Naive thymus-derived CD4-positive, alpha-beta T cell (primary cell): ENCODE measurements at regions of chr11 and their contacts with region 1.

Region 1: GRCh38 chr11:104705490-104706190 is 192.6 kb downstream of the CASP12 start:
- DNase-seq: peak; percentile 10 to 92 (median 87)
- ATAC-seq: peak; percentile 99
- H3K4me3 ChIP-seq: peak overlapping the region; percentile 54
- H3K4me3 Mint-ChIP-seq: peak overlapping the region; percentile 65 to 87 (median 72)
- H3K27ac ChIP-seq: peak overlapping the region; percentile 67
- H3K27ac Mint-ChIP-seq: peak overlapping the region; percentile 82 to 98 (median 96)
- H3K4me1 ChIP-seq: peaks cover 40 to 49% of the 10 kb centered on the region in 2 donors
- H3K4me1 Mint-ChIP-seq: peaks cover 33 to 75% (median 60%) of the 10 kb centered on the region in 7 donors
- H3K27me3 ChIP-seq: no peaks in the 10 kb centered on the region
- H3K27me3 Mint-ChIP-seq: no peaks in the 10 kb centered on the region

Region 2: DNA sequence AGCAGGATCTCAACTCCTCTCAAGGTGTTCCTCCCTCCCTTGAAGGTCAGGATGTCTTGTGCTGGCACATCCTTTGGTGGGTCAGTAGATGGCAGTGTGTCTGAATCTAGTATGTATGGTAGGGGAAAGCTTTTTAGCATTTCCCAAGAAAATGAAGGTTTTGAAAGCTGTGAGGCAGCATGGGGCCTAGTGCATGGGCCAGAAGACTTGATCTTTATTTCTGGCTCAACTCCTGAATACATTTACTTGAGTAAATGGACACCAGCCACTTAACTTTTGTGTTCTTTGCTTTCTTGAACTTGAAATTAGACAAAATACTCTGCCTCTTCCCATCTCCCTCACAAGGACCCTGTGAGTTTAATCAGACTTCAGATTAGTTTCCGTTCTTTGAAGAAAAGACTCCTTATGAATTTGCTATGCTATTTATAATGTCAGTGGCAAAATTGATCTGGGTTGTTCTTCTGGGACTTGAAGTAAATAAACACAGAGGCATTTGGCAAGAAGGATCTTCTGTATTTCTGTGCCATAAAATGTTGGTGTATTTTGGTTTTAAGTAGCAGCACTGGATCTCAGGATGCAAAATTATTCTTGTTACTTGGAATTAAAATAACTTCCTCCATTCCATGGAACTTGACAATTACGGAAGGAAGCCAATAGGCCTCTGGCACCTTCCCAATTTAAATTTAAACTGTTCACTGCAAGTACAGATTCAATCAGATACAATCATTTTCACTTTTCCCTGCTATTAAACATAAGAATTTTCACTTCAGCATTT is 96.1 kb before region 1 on chr11:
- CTCF ChIA-PET with region 1: interaction called, 3 read pairs
- POLR2A ChIA-PET with region 1: no interaction called
- intact Hi-C with region 1: loop called (anchors 1 to 2 kb)
- DNase-seq: peak in 7 of 9 donors; percentile 17 to 63 (median 51)
- ATAC-seq: peak; percentile 95
- H3K4me3 ChIP-seq: no peak overlapping the region
- H3K4me3 Mint-ChIP-seq: no peak overlapping the region
- H3K27ac ChIP-seq: no peak overlapping the region
- H3K27ac Mint-ChIP-seq: peak overlapping the region in 3 of 9 donors; percentile 25 to 47 (median 41)
- H3K4me1 ChIP-seq: peaks cover 0 to 5% of the 10 kb centered on the region in 2 donors
- H3K4me1 Mint-ChIP-seq: peaks cover 0 to 20% (median 11%) of the 10 kb centered on the region in 7 donors
- H3K27me3 ChIP-seq: no peaks in the 10 kb centered on the region
- H3K27me3 Mint-ChIP-seq: peaks cover 0 to 6% (median 0%) of the 10 kb centered on the region in 5 donors

Region 3: GRCh38 chr11:104736502-104736901 is 30.9 kb after region 1 on chr11:
- CTCF ChIA-PET with region 1: no interaction called
- POLR2A ChIA-PET with region 1: interaction called, 3 read pairs
- intact Hi-C with region 1: loop called in 1 of 2 experiments (anchors 2 kb)
- DNase-seq: no peak
- ATAC-seq: peak; percentile 36
- H3K4me3 ChIP-seq: no peak overlapping the region
- H3K4me3 Mint-ChIP-seq: no peak overlapping the region
- H3K27ac ChIP-seq: no peak overlapping the region
- H3K27ac Mint-ChIP-seq: no peak overlapping the region
- H3K4me1 ChIP-seq: no peaks in the 10 kb centered on the region
- H3K4me1 Mint-ChIP-seq: peaks cover 5 to 22% (median 11%) of the 10 kb centered on the region in 7 donors
- H3K27me3 ChIP-seq: no peaks in the 10 kb centered on the region
- H3K27me3 Mint-ChIP-seq: no peaks in the 10 kb centered on the region

Region 4: DNA sequence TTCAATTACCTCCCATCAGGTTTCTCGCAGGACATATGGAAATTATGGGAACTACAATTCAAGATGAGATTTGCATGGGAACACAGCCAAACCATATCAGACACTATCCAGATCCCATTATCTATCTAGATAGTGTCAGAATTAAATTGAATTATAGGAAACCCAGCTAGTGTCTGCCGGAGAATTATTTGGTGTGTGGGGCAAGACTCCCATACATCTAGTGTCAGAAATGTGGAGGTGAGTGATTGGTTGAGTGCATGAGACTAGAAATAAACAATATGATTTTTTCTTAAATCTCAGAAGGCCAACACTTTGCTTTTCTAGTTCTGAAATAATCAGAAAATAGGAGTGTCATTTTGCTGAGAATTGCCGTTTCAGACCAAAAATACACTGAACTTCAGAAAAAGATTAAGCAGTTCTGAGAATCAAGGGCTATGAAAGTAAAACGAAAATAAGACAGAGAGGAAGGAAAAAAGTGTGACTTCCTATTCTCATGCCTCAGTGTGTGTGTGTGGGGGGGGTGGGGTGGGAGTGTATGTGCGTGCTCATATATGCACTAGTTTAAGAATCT is 171.3 kb after region 1 on chr11:
- CTCF ChIA-PET with region 1: no interaction called
- POLR2A ChIA-PET with region 1: no interaction called
- intact Hi-C with region 1: loop called (anchors 1 to 2 kb)
- DNase-seq: peak in 6 of 9 donors; percentile 6 to 31 (median 21)
- ATAC-seq: peak; percentile 85
- H3K4me3 ChIP-seq: peak overlapping the region; percentile 40
- H3K4me3 Mint-ChIP-seq: peak overlapping the region; percentile 45 to 82 (median 75)
- H3K27ac ChIP-seq: peak overlapping the region; percentile 64
- H3K27ac Mint-ChIP-seq: peak overlapping the region; percentile 62 to 97 (median 85)
- H3K4me1 ChIP-seq: peaks cover 20 to 29% of the 10 kb centered on the region in 2 donors
- H3K4me1 Mint-ChIP-seq: peaks cover 25 to 52% (median 43%) of the 10 kb centered on the region in 7 donors
- H3K27me3 ChIP-seq: no peaks in the 10 kb centered on the region
- H3K27me3 Mint-ChIP-seq: no peaks in the 10 kb centered on the region

Region 5: GRCh38 chr11:105044921-105045524 is 339.4 kb after region 1 on chr11 and contains the start of gene CARD16:
- CTCF ChIA-PET with region 1: no interaction called
- POLR2A ChIA-PET with region 1: interaction called, 3 read pairs
- intact Hi-C with region 1: loop called (anchors 5 kb)
- DNase-seq: peak; percentile 8 to 57 (median 47)
- ATAC-seq: peak; percentile 91
- H3K4me3 ChIP-seq: peak within 1 kb of the TSS; percentile 62
- H3K4me3 Mint-ChIP-seq: peak within 1 kb of the TSS; percentile 89 to 100 (median 94)
- H3K27ac ChIP-seq: peak within 1 kb of the TSS; percentile 87
- H3K27ac Mint-ChIP-seq: peak within 1 kb of the TSS; percentile 94 to 100 (median 97)
- H3K4me1 ChIP-seq: peaks cover 19% of the 10 kb centered on the region in 2 donors
- H3K4me1 Mint-ChIP-seq: peaks cover 35 to 67% (median 48%) of the 10 kb centered on the region in 7 donors
- H3K27me3 ChIP-seq: no peaks in the 10 kb centered on the region
- H3K27me3 Mint-ChIP-seq: no peaks in the 10 kb centered on the region
- total RNA-seq, gene CARD16: 37.1 to 103 (median 42.4) TPM

Region 6: GRCh38 chr11:106076919-106077608 is 1371.4 kb after region 1 on chr11 and contains the start of gene KBTBD3:
- CTCF ChIA-PET with region 1: no interaction called
- POLR2A ChIA-PET with region 1: no interaction called
- intact Hi-C with region 1: loop called (anchors 2 to 5 kb)
- DNase-seq: peak; percentile 90 to 99 (median 98)
- ATAC-seq: peak; percentile 93
- H3K4me3 ChIP-seq: peak within 1 kb of the TSS; percentile 85
- H3K4me3 Mint-ChIP-seq: peak within 1 kb of the TSS; percentile 95 to 100 (median 98)
- H3K27ac ChIP-seq: peak within 1 kb of the TSS; percentile 91
- H3K27ac Mint-ChIP-seq: peak within 1 kb of the TSS; percentile 91 to 99 (median 98)
- H3K4me1 ChIP-seq: peaks cover 29 to 35% of the 10 kb centered on the region in 2 donors
- H3K4me1 Mint-ChIP-seq: peaks cover 34 to 76% (median 69%) of the 10 kb centered on the region in 7 donors
- H3K27me3 ChIP-seq: no peaks in the 10 kb centered on the region
- H3K27me3 Mint-ChIP-seq: no peaks in the 10 kb centered on the region
- total RNA-seq, gene KBTBD3: 5.1 to 16.6 (median 7.3) TPM